PC-3 (cell line): ENCODE measurements at regions of chr9 and their contacts with region 1.

Region 1: GRCh38 chr9:14768405-14769229 is 46.1 kb upstream of the CER1 start:
- DNase-seq: peak; percentile 79
- ATAC-seq: peak; percentile 64
- H3K4me3 ChIP-seq: peak overlapping the region; percentile 50; the same call in 1 of the 2 replicates
- H3K27ac ChIP-seq: no peak overlapping the region
- H3K4me1 ChIP-seq: peaks cover 15% of the 10 kb centered on the region
- H3K27me3 ChIP-seq: no peaks in the 10 kb centered on the region
- CTCF ChIP-seq: peak; percentile 71

Region 2: GRCh38 chr9:14466429-14466818 is 302.2 kb before region 1 on chr9:
- CTCF ChIA-PET with region 1: interaction called, 5 read pairs
- POLR2A ChIA-PET with region 1: no interaction called
- intact Hi-C with region 1: loop called (anchors 1 kb)
- DNase-seq: no peak
- ATAC-seq: no peak
- H3K4me3 ChIP-seq: no peak overlapping the region
- H3K27ac ChIP-seq: no peak overlapping the region
- H3K4me1 ChIP-seq: no peaks in the 10 kb centered on the region
- H3K27me3 ChIP-seq: no peaks in the 10 kb centered on the region
- CTCF ChIP-seq: no peak

Region 3: GRCh38 chr9:14652729-14653377 is 115.8 kb before region 1 on chr9:
- CTCF ChIA-PET with region 1: no interaction called
- POLR2A ChIA-PET with region 1: no interaction called
- intact Hi-C with region 1: loop called (anchors 5 kb)
- DNase-seq: peak; percentile 37
- ATAC-seq: peak; percentile 49; the same call in 1 of the 2 replicates
- H3K4me3 ChIP-seq: no peak overlapping the region
- H3K27ac ChIP-seq: no peak overlapping the region
- H3K4me1 ChIP-seq: no peaks in the 10 kb centered on the region
- H3K27me3 ChIP-seq: no peaks in the 10 kb centered on the region
- CTCF ChIP-seq: peak; percentile 70

Region 4: DNA sequence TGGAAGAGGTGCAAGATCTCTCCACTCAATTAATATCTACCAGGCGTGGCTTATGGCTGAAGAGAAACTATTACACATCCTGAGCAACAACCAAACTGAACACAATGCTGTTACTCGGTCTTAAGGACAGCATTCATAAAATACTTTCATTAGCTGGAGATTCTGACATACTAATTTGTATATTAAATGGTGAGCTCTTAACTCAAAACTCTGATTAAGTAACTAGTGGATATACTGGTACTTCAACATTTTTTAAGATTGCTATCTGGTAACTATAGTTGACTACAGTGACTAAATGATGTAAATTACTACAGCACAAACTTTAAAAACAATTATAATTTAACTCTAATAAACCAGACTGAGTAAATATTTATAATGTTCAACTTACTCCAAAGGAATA is 91.2 kb before region 1 on chr9:
- CTCF ChIA-PET with region 1: no interaction called
- POLR2A ChIA-PET with region 1: no interaction called
- intact Hi-C with region 1: no loop called
- DNase-seq: no peak
- ATAC-seq: no peak
- H3K4me3 ChIP-seq: no peak overlapping the region
- H3K27ac ChIP-seq: no peak overlapping the region
- H3K4me1 ChIP-seq: no peaks in the 10 kb centered on the region
- H3K27me3 ChIP-seq: no peaks in the 10 kb centered on the region
- CTCF ChIP-seq: no peak

Region 5: GRCh38 chr9:14846871-14847311 is 78.3 kb after region 1 on chr9:
- CTCF ChIA-PET with region 1: no interaction called
- POLR2A ChIA-PET with region 1: no interaction called
- intact Hi-C with region 1: loop called (anchors 5 kb)
- DNase-seq: peak; percentile 64
- ATAC-seq: peak; percentile 84
- H3K4me3 ChIP-seq: no peak overlapping the region
- H3K27ac ChIP-seq: no peak overlapping the region
- H3K4me1 ChIP-seq: no peaks in the 10 kb centered on the region
- H3K27me3 ChIP-seq: no peaks in the 10 kb centered on the region
- CTCF ChIP-seq: peak; percentile 80

Region 6: DNA sequence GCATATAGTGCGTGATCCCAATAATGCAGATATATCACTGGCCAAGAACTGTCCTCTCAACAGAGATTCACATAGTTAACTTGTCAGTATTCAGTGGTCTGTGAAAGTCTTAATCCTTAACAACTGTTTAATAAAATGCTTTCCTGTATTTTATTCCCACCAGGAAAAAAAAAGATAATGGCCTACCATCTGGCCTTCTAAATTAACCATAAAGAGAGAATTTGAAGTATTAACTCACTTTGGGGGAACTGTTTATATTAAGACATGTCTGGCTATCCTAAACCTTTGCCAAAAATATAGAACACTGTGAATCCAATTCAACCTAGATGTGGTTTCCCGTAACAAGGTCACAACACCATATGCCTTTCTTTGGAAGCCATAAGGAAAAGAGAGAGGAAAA is 142.4 kb after region 1 on chr9:
- CTCF ChIA-PET with region 1: no interaction called
- POLR2A ChIA-PET with region 1: no interaction called
- intact Hi-C with region 1: no loop called
- DNase-seq: no peak
- ATAC-seq: no peak
- H3K4me3 ChIP-seq: no peak overlapping the region
- H3K27ac ChIP-seq: no peak overlapping the region
- H3K4me1 ChIP-seq: peaks cover 37% of the 10 kb centered on the region
- H3K27me3 ChIP-seq: no peaks in the 10 kb centered on the region
- CTCF ChIP-seq: no peak